ENCODE measurements at regions of chr5 and their contacts with region 1.

Region 1: GRCh38 chr5:23820765-23821471 is 313.5 kb downstream of the PRDM9 start:
- DNase-seq: peak; percentile 5 to 58
- ATAC-seq: peak; percentile 78 to 81; a peak in 5 of 6 replicates
- H3K4me3 ChIP-seq: no peak overlapping the region
- H3K27ac ChIP-seq: no peak overlapping the region
- H3K4me1 ChIP-seq: no peaks in the 10 kb centered on the region
- CTCF ChIP-seq: peak; percentile 39
- EP300 ChIP-seq: no peak
- POLR2A ChIP-seq: no peak
- RAD21 ChIP-seq: peak; percentile 43 to 70; a peak in 3 of 5 replicates

Region 2: GRCh38 chr5:24110004-24110615 is 289.2 kb after region 1 on chr5:
- CTCF ChIA-PET with region 1: interaction called, 14 read pairs
- POLR2A ChIA-PET with region 1: no interaction called
- DNase-seq: peak; percentile 8 to 43
- ATAC-seq: no peak
- H3K4me3 ChIP-seq: no peak overlapping the region
- H3K27ac ChIP-seq: no peak overlapping the region
- H3K4me1 ChIP-seq: no peaks in the 10 kb centered on the region
- CTCF ChIP-seq: peak; percentile 59
- EP300 ChIP-seq: no peak
- POLR2A ChIP-seq: no peak
- RAD21 ChIP-seq: peak; percentile 59 to 62

Region 3: GRCh38 chr5:24235946-24236345 is 415.0 kb after region 1 on chr5:
- CTCF ChIA-PET with region 1: no interaction called
- POLR2A ChIA-PET with region 1: no interaction called
- DNase-seq: no peak
- ATAC-seq: no peak
- H3K4me3 ChIP-seq: no peak overlapping the region
- H3K27ac ChIP-seq: no peak overlapping the region
- H3K4me1 ChIP-seq: no peaks in the 10 kb centered on the region
- CTCF ChIP-seq: no peak
- EP300 ChIP-seq: no peak
- POLR2A ChIP-seq: no peak
- RAD21 ChIP-seq: no peak